ENCODE measurements at regions of chr16 and their contacts with region 1.

Region 1: GRCh38 chr16:84617791-84618580 is at the start of gene COTL1:
- DNase-seq: peak; percentile 90
- H3K4me3 Mint-ChIP-seq: peak within 1 kb of the TSS; percentile 92
- H3K27ac Mint-ChIP-seq: peak within 1 kb of the TSS; percentile 76
- H3K4me1 Mint-ChIP-seq: peaks cover 45% of the 10 kb centered on the region
- H3K27me3 Mint-ChIP-seq: peaks cover 6% of the 10 kb centered on the region
- total RNA-seq, gene COTL1: 478 and 483 TPM in 2 replicates

Region 2: DNA sequence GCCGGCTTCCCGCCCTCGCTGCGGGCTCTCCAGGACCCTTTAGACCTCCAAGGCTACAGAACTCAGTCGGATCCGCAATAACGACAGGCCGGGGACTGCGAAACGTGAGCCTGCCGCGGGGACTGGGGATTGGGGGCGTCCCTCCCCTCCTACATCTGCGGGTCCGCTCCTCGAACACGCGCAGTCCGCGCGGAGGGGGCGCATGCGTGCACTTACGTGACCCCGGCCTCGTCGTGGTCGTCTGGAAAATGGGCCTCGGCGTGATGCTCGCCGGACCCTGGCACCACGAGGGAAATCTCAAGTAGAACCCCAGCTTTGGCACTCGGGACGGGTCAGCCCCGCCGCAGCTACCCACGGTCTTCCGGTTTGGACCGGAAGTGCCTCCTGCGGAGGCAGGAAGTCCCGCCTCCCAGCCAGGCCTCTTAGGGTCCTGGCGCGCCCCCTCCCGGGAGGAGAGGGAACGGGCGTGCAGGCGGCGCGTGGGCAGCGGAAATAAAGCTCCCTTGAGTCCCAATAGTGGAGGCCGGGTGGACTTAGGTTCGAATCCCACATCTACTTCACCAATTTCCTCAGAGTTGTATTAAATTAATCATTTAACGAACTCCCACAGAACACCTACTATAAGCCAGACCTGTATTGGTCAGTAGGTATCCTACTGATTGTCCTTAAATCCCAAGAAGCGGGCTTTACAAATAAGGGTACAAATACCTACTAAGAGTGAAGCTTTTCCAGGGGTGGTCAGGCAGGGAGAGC is 431.1 kb before region 1 on chr16 and contains the start of gene TAF1C:
- intact Hi-C with region 1: no loop called
- DNase-seq: peak; percentile 83
- H3K4me3 Mint-ChIP-seq: peak within 1 kb of the TSS; percentile 93
- H3K27ac Mint-ChIP-seq: peak within 1 kb of the TSS; percentile 84
- H3K4me1 Mint-ChIP-seq: peaks cover 11% of the 10 kb centered on the region
- H3K27me3 Mint-ChIP-seq: no peaks in the 10 kb centered on the region
- total RNA-seq, gene TAF1C: 57.5 and 64.4 TPM in 2 replicates

Region 3: GRCh38 chr16:84548971-84549844 is 68.8 kb before region 1 on chr16:
- intact Hi-C with region 1: loop called (anchors 2 kb)
- DNase-seq: peak; percentile 56
- H3K4me3 Mint-ChIP-seq: peak overlapping the region; percentile 87
- H3K27ac Mint-ChIP-seq: peak overlapping the region; percentile 98
- H3K4me1 Mint-ChIP-seq: peaks cover 57% of the 10 kb centered on the region
- H3K27me3 Mint-ChIP-seq: no peaks in the 10 kb centered on the region

Region 4: DNA sequence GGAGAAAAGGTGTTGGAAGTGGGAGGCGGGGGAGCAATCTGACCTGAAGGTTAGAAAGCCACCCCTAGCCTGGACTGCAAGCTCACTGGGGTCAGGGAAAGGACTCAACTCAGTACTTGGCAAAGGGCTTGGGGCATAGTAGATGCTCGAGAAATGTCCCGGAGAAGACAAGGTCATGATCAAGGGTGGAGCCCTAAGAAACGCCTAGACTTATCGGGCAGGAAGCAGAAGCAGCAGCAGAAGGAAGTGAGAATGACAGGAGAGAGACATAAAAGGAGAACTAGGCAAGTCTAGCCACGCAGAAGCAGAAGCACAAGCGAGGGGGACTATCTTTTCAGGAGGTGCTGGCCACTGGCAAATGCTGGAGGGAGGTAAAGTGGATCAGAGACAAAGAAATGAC is 10.3 kb before region 1 on chr16:
- intact Hi-C with region 1: loop called (anchors 1 kb)
- DNase-seq: peak; percentile 29
- H3K4me3 Mint-ChIP-seq: peak overlapping the region; percentile 70
- H3K27ac Mint-ChIP-seq: peak overlapping the region; percentile 86
- H3K4me1 Mint-ChIP-seq: peaks cover 88% of the 10 kb centered on the region
- H3K27me3 Mint-ChIP-seq: no peaks in the 10 kb centered on the region

Region 5: DNA sequence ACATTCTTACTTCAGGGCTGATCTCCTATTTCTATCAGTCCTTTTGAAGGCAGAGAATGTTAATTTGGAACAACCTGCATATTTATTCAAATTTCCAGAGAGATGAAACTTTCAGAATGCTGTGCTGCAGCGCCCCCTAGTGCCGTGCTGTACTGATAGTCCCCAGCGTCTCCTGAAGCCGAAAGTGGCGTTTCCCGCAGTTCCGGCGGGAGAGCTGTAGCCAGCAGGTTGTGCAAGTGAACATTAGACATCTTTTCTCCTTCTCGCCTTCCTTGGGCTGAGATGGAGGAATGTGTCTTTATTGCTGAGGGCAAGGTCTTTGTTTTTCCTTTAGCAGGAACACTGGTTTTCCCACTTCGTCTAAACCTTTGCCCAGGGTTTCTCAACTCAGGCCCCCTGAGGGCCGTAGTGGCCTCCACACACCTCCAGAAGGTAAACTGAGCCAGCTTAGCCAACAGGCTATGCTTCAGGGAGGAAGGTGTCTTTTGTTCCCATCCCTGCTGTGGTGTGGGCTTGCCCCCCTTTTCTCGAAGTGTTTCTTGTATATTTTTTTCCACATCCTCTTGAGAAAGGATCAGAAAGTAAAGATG is 108.2 kb after region 1 on chr16:
- intact Hi-C with region 1: loop called (anchors 1 kb)
- DNase-seq: peak; percentile 65
- H3K4me3 Mint-ChIP-seq: no peak overlapping the region
- H3K27ac Mint-ChIP-seq: no peak overlapping the region
- H3K4me1 Mint-ChIP-seq: peaks cover 53% of the 10 kb centered on the region
- H3K27me3 Mint-ChIP-seq: no peaks in the 10 kb centered on the region

Region 6: GRCh38 chr16:85027349-85027957 is 409.5 kb after region 1 on chr16 and contains the start of gene KIAA0513:
- intact Hi-C with region 1: loop called (anchors 5 kb)
- DNase-seq: peak; percentile 94
- H3K4me3 Mint-ChIP-seq: peak within 1 kb of the TSS; percentile 88
- H3K27ac Mint-ChIP-seq: peak within 1 kb of the TSS; percentile 96
- H3K4me1 Mint-ChIP-seq: peaks cover 33% of the 10 kb centered on the region
- H3K27me3 Mint-ChIP-seq: no peaks in the 10 kb centered on the region
- total RNA-seq, gene KIAA0513: 12.8 and 13.6 TPM in 2 replicates

Measured in activated T-helper 2 cell treated with anti-CD3 and anti-CD28 coated beads, Interferon-gamma antibody, Interleukin-2, Interleukin-4, amounts not matched to agents 10 μg/mL and 5 μg/mL and 100 μg/mL, durations not matched to agents 14 hours and 24 hours and 36 hours (primary cell).